ENCODE measurements at regions of chr4 and their contacts with region 1.

Region 1: GRCh38 chr4:109729718-109730618 is at the start of gene PLA2G12A:
- DNase-seq: peak; percentile 72 to 88
- H3K4me3 ChIP-seq: peak within 1 kb of the TSS; percentile 85 to 94 (median 89)
- H3K27ac ChIP-seq: peak within 1 kb of the TSS; percentile 73
- H3K4me1 ChIP-seq: peaks cover 0 to 3% (median 0%) of the 10 kb centered on the region in 4 experiments; a peak in 1 of 7 replicates
- H3K27me3 ChIP-seq: no peaks in the 10 kb centered on the region
- CTCF ChIP-seq: no peak
- EP300 ChIP-seq: no peak
- POLR2A ChIP-seq: peak; percentile 44 to 66; a peak in 2 of 3 replicates
- RAD21 ChIP-seq: no peak
- total RNA-seq, gene PLA2G12A: 47.2 and 49.9 TPM in 2 replicates

Region 2: GRCh38 chr4:109719604-109720003 is 10.4 kb before region 1 on chr4:
- CTCF ChIA-PET with region 1: no interaction called
- POLR2A ChIA-PET with region 1: no interaction called
- DNase-seq: no peak
- H3K4me3 ChIP-seq: no peak overlapping the region
- H3K27ac ChIP-seq: no peak overlapping the region
- H3K4me1 ChIP-seq: no peaks in the 10 kb centered on the region
- H3K27me3 ChIP-seq: no peaks in the 10 kb centered on the region
- CTCF ChIP-seq: no peak
- EP300 ChIP-seq: no peak
- POLR2A ChIP-seq: no peak
- RAD21 ChIP-seq: no peak

Region 3: GRCh38 chr4:109815151-109816081 is 85.4 kb after region 1 on chr4 and contains the start of gene GAR1:
- CTCF ChIA-PET with region 1: no interaction called
- POLR2A ChIA-PET with region 1: interaction called, 12 read pairs
- DNase-seq: peak; percentile 87 to 91
- H3K4me3 ChIP-seq: peak within 1 kb of the TSS; percentile 82 to 98 (median 90)
- H3K27ac ChIP-seq: peak within 1 kb of the TSS; percentile 92
- H3K4me1 ChIP-seq: peaks cover 0 to 7% (median 4%) of the 10 kb centered on the region in 4 experiments; a peak in 4 of 7 replicates
- H3K27me3 ChIP-seq: no peaks in the 10 kb centered on the region
- CTCF ChIP-seq: no peak
- EP300 ChIP-seq: no peak
- POLR2A ChIP-seq: peak in 1 of 2 experiments; percentile 41; a peak in 2 of 3 replicates
- RAD21 ChIP-seq: no peak
- total RNA-seq, gene GAR1: 37.5 and 37.9 TPM in 2 replicates